B cell (primary cell): ENCODE measurements at regions of chr21 and their contacts with region 1.

Region 1: DNA sequence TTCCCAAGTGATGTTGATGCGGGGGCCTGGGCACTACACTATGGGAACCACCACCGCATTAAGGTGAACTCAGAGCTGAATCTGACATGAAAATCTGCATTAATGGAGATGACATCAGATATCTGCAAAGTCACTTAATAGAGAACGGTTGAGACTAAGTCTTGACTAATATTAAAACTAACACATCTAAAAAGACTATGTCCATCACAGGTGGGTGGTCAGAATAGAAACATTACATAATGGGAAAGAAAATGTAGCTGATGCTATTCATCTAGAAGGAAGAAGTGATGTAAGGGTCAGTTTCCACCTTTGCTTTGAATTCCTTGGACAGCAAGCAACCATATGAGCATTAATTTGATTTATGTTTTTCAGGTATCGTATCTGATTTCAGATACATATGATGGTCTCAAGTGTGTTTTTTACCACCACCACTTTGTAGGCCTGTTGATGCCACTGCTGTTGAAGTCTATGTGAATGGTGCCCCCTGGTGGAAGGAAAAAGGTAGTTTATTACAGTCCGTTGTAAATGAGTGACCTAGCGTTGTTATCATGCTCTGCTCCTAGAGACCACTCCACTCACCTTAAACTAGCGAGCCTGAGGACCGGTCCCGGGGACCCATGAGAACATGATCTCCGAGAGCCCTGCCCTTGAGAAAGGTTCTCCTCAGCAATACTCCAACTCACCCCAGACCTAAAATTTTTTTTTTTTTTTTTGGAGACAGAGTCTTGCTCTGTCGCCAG is 73.5 kb downstream of the BACH1 start:
- DNase-seq: peak; percentile 87
- ATAC-seq: peak; percentile 78
- H3K4me3 ChIP-seq: no peak overlapping the region
- H3K4me3 Mint-ChIP-seq: no peak overlapping the region
- H3K27ac ChIP-seq: peak overlapping the region in 1 of 2 donors; percentile 24
- H3K27ac Mint-ChIP-seq: no peak overlapping the region
- H3K4me1 ChIP-seq: peaks cover 0 to 8% of the 10 kb centered on the region in 2 donors
- H3K4me1 Mint-ChIP-seq: peaks cover 12% of the 10 kb centered on the region
- H3K27me3 ChIP-seq: no peaks in the 10 kb centered on the region
- H3K27me3 Mint-ChIP-seq: no peaks in the 10 kb centered on the region
- CTCF ChIP-seq: peak; percentile 83

Region 2: GRCh38 chr21:29091032-29091431 is 281.2 kb before region 1 on chr21:
- CTCF ChIA-PET with region 1: interaction called, 310 read pairs
- POLR2A ChIA-PET with region 1: interaction called, 3 read pairs
- intact Hi-C with region 1: loop called (anchors 1 kb)
- DNase-seq: no peak
- ATAC-seq: no peak
- H3K4me3 ChIP-seq: no peak overlapping the region
- H3K4me3 Mint-ChIP-seq: no peak overlapping the region
- H3K27ac ChIP-seq: no peak overlapping the region
- H3K27ac Mint-ChIP-seq: no peak overlapping the region
- H3K4me1 ChIP-seq: no peaks in the 10 kb centered on the region
- H3K4me1 Mint-ChIP-seq: peaks cover 3% of the 10 kb centered on the region
- H3K27me3 ChIP-seq: no peaks in the 10 kb centered on the region
- H3K27me3 Mint-ChIP-seq: no peaks in the 10 kb centered on the region
- CTCF ChIP-seq: no peak

Region 3: GRCh38 chr21:29175408-29176134 is 196.7 kb before region 1 on chr21:
- CTCF ChIA-PET with region 1: interaction called, 10 read pairs
- POLR2A ChIA-PET with region 1: no interaction called
- intact Hi-C with region 1: no loop called
- DNase-seq: no peak
- ATAC-seq: no peak
- H3K4me3 ChIP-seq: no peak overlapping the region
- H3K4me3 Mint-ChIP-seq: peak overlapping the region; percentile 74
- H3K27ac ChIP-seq: no peak overlapping the region
- H3K27ac Mint-ChIP-seq: peak overlapping the region; percentile 39
- H3K4me1 ChIP-seq: peaks cover 16 to 18% of the 10 kb centered on the region in 2 donors
- H3K4me1 Mint-ChIP-seq: peaks cover 22% of the 10 kb centered on the region
- H3K27me3 ChIP-seq: no peaks in the 10 kb centered on the region
- H3K27me3 Mint-ChIP-seq: no peaks in the 10 kb centered on the region
- CTCF ChIP-seq: no peak

Region 4: DNA sequence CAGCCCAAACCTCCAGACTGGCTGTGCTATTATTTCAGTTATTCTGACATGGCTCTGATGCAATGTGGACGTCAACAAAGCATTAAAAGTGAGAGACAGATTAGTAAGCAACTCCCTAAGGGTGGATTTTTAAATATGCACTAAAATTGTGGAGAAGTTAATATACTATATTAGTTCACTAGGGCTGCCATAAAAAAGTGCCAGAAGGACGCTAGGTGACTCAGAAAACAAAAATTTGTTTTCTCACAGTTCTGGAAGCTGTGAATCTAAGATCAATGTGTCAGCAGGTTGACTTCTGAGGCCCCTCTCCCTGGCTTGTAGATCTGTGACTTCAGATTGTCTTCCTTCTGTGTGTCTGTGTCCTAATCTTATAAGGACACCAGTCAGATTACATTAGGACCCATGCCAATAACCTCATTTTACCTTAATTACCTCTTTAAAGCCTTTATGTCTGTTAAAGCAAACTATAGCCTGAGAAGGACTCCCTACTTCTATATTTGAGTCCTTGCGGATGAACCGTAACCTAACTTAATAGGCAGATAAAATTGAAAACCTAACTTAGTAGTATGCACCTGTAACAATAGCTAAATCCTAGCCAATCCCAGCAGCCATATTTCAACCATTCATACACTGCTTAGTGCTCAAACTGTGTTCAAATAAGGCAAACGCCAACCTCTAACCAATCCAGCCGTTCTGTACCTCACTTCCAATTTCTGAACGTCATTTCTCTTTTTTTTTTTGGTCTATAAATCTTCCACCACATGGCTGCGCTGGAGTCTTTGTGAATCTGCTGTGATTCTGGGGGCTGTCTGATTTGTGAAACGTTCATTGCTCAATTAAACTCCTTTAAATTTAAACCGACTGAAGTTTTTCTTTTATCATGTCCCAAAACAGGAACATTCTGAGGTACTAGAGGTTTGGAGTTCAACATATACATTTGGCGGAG is 139.4 kb before region 1 on chr21:
- CTCF ChIA-PET with region 1: interaction called, 32 read pairs
- POLR2A ChIA-PET with region 1: no interaction called
- intact Hi-C with region 1: loop called (anchors 1 kb)
- DNase-seq: peak; percentile 74
- ATAC-seq: peak; percentile 28
- H3K4me3 ChIP-seq: peak overlapping the region in 1 of 5 experiments; percentile 8
- H3K4me3 Mint-ChIP-seq: peak overlapping the region; percentile 71
- H3K27ac ChIP-seq: peak overlapping the region; percentile 60 to 81
- H3K27ac Mint-ChIP-seq: peak overlapping the region; percentile 83
- H3K4me1 ChIP-seq: peaks cover 43 to 47% of the 10 kb centered on the region in 2 donors
- H3K4me1 Mint-ChIP-seq: peaks cover 65% of the 10 kb centered on the region
- H3K27me3 ChIP-seq: no peaks in the 10 kb centered on the region
- H3K27me3 Mint-ChIP-seq: no peaks in the 10 kb centered on the region
- CTCF ChIP-seq: peak; percentile 50

Region 5: DNA sequence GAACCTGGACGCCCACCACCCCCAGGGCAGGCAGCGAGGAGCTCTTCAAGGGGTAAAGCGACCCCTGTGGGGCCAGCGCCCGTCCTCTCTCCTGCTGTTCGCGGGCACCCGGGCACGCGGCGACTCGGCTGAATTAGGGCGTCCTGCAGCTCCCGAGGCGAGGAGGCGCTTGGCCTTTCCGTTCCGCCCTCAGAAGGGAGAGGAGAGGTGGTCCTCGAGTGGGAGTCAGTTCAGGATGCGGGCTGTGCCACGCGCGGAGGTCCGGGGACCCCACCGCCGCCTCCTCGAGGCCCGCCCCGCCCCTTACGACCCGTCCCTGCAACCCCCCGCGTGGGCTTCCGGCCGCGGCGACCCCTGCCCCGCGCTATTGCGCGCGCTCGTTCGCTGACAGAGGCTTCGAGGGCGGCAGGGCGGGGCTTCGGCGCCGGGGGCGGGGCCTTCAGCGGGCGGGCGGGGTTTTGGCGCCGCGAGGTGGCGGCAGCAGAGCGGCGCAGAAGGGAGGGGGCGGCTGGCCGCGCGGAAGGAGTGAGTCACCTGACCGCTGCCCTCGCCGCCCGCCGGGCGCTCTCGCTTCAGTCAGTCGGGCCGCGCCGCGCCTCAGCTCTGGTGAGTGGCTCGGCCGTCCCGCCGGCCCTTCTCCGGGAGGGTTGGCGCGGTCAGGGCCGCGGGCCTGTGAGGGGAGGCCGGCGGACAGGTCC is 73.7 kb before region 1 on chr21 and contains the start of gene BACH1:
- CTCF ChIA-PET with region 1: interaction called, 37 read pairs
- POLR2A ChIA-PET with region 1: interaction called, 4 read pairs
- intact Hi-C with region 1: loop called (anchors 2 kb)
- DNase-seq: peak; percentile 92
- ATAC-seq: peak; percentile 53
- H3K4me3 ChIP-seq: peak within 1 kb of the TSS; percentile 69 to 99 (median 73)
- H3K4me3 Mint-ChIP-seq: peak within 1 kb of the TSS; percentile 97
- H3K27ac ChIP-seq: peak within 1 kb of the TSS; percentile 87 to 89
- H3K27ac Mint-ChIP-seq: peak within 1 kb of the TSS; percentile 97
- H3K4me1 ChIP-seq: peaks cover 59 to 62% of the 10 kb centered on the region in 2 donors
- H3K4me1 Mint-ChIP-seq: peaks cover 69% of the 10 kb centered on the region
- H3K27me3 ChIP-seq: no peaks in the 10 kb centered on the region
- H3K27me3 Mint-ChIP-seq: no peaks in the 10 kb centered on the region
- CTCF ChIP-seq: peak; percentile 46
- total RNA-seq, gene BACH1: 221 and 238 TPM in 2 replicates

Region 6: GRCh38 chr21:29360799-29361765 is 11.2 kb before region 1 on chr21:
- CTCF ChIA-PET with region 1: interaction called, 14 read pairs
- POLR2A ChIA-PET with region 1: no interaction called
- intact Hi-C with region 1: no loop called
- DNase-seq: no peak
- ATAC-seq: no peak
- H3K4me3 ChIP-seq: no peak overlapping the region
- H3K4me3 Mint-ChIP-seq: no peak overlapping the region
- H3K27ac ChIP-seq: no peak overlapping the region
- H3K27ac Mint-ChIP-seq: no peak overlapping the region
- H3K4me1 ChIP-seq: peaks cover 0 to 5% of the 10 kb centered on the region in 2 donors
- H3K4me1 Mint-ChIP-seq: peaks cover 13% of the 10 kb centered on the region
- H3K27me3 ChIP-seq: no peaks in the 10 kb centered on the region
- H3K27me3 Mint-ChIP-seq: no peaks in the 10 kb centered on the region
- CTCF ChIP-seq: no peak